Body of pancreas (tissue), 4 donors: ENCODE measurements at regions of chr1 and their contacts with region 1.

Region 1: DNA sequence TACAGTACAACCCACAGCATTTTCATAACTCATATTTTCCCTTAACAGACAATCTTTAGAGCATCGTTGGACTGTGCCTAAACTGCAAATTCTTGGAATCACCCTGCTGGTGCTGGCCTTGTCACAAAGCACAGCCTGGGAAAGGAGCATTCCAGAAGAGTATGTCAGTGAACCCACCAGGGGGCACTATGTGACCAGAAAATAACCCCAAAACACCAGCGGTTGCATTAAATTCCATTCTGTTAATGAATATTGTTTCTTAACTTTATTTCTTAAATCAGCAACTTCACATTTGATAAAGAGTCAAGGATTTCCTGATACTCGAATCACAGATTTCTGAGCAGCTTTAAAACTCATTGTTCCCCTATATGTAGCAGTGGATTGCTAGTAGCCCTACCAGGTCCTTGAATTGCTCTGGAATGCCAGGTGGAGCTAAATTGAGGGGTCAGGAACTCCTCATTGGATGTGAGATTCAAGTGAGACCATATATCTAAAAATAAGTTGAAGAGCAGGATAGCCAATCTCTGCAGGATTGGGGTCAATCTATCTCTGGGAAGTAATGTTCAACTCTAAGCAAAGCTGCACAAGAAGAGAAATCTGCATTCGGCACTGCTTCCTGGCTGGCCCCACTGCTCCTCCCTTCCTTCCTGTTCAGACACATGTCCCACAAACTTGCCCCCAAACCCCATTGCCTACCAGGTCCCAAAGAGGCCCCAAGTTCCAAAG is 12.7 kb upstream of the RAB4A start:
- DNase-seq: peak; percentile 70 to 77 (median 76)
- ATAC-seq: peak; percentile 88
- H3K4me3 ChIP-seq: no peak overlapping the region
- H3K27ac ChIP-seq: peak overlapping the region in 2 of 4 donors; percentile 18 to 38
- H3K4me1 ChIP-seq: peaks cover 8% of the 10 kb centered on the region
- H3K27me3 ChIP-seq: no peaks in the 10 kb centered on the region
- CTCF ChIP-seq: peak; percentile 48 to 94 (median 83)
- POLR2A ChIP-seq: no peak

Region 2: DNA sequence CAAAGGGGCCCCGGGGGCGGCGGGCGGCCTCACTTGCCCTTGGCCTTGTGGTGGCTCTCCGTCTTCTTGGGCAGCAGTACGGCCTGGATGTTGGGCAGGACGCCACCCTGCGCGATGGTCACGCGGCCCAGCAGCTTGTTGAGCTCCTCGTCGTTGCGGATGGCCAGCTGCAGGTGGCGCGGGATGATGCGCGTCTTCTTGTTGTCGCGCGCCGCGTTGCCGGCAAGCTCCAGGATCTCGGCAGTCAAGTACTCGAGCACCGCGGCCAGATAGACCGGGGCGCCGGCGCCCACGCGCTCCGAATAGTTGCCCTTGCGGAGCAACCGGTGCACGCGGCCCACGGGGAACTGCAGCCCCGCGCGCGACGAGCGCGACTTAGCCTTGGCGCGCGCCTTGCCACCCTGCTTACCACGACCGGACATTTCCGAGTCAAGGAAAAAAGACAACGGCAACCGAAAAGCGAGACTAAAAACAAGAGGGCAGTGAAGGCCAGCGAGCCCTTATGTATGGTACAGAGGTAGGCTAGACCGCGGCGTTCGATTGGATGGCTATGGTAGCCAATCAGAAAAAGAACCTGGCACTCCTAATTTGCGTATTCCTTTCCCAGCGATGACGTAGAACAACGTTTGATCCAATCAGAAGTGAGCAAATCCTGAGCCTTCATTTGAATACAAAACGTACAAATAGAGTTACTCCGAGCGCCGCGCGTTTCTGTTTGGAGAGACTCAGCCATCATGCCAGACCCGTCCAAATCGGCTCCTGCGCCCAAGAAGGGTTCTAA is 800.6 kb before region 1 on chr1:
- intact Hi-C with region 1: no loop called
- DNase-seq: peak; percentile 76 to 92 (median 88)
- ATAC-seq: peak; percentile 96
- H3K4me3 ChIP-seq: peak overlapping the region in 1 of 2 donors; percentile 13
- H3K27ac ChIP-seq: peak overlapping the region; percentile 41 to 80 (median 69)
- H3K4me1 ChIP-seq: peaks cover 30% of the 10 kb centered on the region
- H3K27me3 ChIP-seq: peaks cover 0 to 7% of the 10 kb centered on the region in 2 donors
- CTCF ChIP-seq: peak in 4 of 7 experiments; percentile 24 to 38 (median 31)
- POLR2A ChIP-seq: peak; percentile 11 to 73 (median 70)

Region 3: DNA sequence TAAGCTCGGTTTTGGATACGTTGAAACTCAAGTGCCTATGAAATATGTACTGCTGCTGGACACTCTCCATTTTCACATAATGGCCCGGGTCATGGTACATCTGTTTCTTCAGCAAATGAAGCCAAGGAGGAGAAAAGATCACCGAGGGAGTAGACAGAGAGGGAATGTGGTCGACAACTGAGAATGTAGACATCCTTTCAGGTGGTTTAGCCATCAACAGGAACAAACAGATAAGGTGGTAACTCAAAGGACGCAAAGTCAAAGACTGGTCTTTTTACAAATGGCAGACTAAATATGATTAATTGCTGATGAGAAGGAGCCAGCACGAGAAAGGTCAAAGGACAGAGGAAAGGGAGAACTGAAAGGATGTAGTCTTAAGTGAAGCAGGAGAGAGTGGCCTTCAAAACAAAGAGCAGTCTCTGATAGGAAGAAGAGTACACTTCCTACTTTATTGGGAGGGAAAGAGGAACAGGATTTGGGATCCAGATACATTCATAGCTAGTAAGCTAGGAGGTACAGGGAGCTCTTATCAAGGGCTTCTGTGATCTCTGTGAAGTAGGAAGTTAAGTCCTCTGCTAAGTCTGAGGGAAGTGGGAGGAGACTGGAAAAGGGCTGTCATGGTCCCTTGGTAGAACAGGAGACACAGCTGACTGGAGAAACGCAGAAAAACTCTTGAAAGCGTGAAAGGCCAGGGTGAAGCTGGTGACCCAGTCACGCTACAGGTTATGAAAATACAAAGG is 221.6 kb after region 1 on chr1:
- intact Hi-C with region 1: loop called (anchors 10 kb)
- DNase-seq: no peak
- ATAC-seq: no peak
- H3K4me3 ChIP-seq: no peak overlapping the region
- H3K27ac ChIP-seq: no peak overlapping the region
- H3K4me1 ChIP-seq: no peaks in the 10 kb centered on the region
- H3K27me3 ChIP-seq: no peaks in the 10 kb centered on the region
- CTCF ChIP-seq: no peak
- POLR2A ChIP-seq: no peak

Region 4: GRCh38 chr1:229514578-229515275 is 256.5 kb after region 1 on chr1:
- intact Hi-C with region 1: loop called (anchors 10 kb)
- DNase-seq: peak; percentile 57 to 72 (median 70)
- ATAC-seq: peak; percentile 82
- H3K4me3 ChIP-seq: no peak overlapping the region
- H3K27ac ChIP-seq: no peak overlapping the region
- H3K4me1 ChIP-seq: peaks cover 4% of the 10 kb centered on the region
- H3K27me3 ChIP-seq: no peaks in the 10 kb centered on the region
- CTCF ChIP-seq: peak; percentile 60 to 80 (median 67)
- POLR2A ChIP-seq: no peak